HAP-1 (cell line): ENCODE measurements at regions of chr17 and their contacts with region 1.

Region 1: GRCh38 chr17:19569785-19570543 is 36.3 kb downstream of the SLC47A1 start:
- DNase-seq: no peak
- H3K4me3 ChIP-seq: no peak overlapping the region
- H3K4me1 ChIP-seq: no peaks in the 10 kb centered on the region; the same call in 1 of the 2 replicates
- H3K27me3 ChIP-seq: no peaks in the 10 kb centered on the region

Region 2: DNA sequence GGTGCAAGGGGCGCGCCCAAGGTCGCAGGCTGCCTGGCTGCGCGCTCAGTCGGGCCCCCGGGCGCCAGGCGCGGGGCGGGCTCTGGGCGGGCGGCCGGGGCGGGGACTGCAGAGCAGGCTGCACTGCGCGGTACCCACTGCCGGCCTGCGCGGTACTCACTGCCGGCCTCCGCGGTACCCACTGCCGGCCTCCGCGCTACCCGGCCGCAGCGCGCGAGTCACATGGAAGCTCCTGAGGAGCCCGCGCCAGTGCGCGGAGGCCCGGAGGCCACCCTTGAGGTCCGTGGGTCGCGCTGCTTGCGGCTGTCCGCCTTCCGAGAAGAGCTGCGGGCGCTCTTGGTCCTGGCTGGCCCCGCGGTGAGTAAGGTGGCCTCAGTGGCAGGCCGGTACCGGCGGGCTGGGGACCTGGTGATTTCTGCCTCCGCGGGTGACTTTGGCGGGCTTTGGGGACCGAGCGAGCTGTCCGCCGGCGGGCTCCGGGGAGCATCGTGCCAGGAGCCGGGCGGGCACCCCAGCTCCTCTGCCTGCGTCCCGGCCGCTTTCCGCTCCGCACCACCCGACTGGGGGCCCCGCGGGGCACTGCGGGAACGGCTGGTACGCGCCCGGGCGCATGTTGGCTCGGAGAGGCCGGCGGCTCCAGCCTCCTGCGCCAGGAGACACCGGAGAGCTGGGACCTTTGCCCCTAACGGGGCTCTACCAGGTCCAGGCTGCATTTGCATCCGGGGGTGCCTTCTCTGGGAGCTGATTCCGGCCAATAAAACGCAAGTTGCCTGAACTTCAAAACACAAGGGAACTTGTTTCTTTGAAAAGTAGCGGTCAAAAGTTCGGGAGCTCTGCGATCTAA is 36.0 kb before region 1 on chr17 and contains the start of gene SLC47A1:
- in situ Hi-C with region 1: loop called (anchors 5 kb)
- DNase-seq: peak; percentile 37 to 66
- H3K4me3 ChIP-seq: peak within 1 kb of the TSS; percentile 62
- H3K4me1 ChIP-seq: peaks cover 10% of the 10 kb centered on the region
- H3K27me3 ChIP-seq: no peaks in the 10 kb centered on the region